ENCODE measurements at regions of chr14 and their contacts with region 1.

Region 1: GRCh38 chr14:37903343-37904191 is 304.1 kb upstream of the SSTR1 start:
- DNase-seq: peak; percentile 75
- ATAC-seq: peak; percentile 90
- H3K4me3 ChIP-seq: peak overlapping the region in 2 of 3 experiments; percentile 1 to 29; a peak in 2 of 6 replicates
- H3K27ac ChIP-seq: no peak overlapping the region
- H3K4me1 ChIP-seq: peaks cover 8% of the 10 kb centered on the region
- H3K27me3 ChIP-seq: no peaks in the 10 kb centered on the region
- CTCF ChIP-seq: peak; percentile 79
- EP300 ChIP-seq: no peak
- POLR2A ChIP-seq: no peak
- RAD21 ChIP-seq: peak; percentile 69

Region 2: GRCh38 chr14:38016497-38016896 is 112.9 kb after region 1 on chr14:
- CTCF ChIA-PET with region 1: interaction called, 6 read pairs
- POLR2A ChIA-PET with region 1: no interaction called
- in situ Hi-C with region 1: no loop called
- intact Hi-C with region 1: loop called (anchors 1 kb)
- DNase-seq: peak; percentile 41
- ATAC-seq: peak; percentile 95
- H3K4me3 ChIP-seq: no peak overlapping the region
- H3K27ac ChIP-seq: no peak overlapping the region
- H3K4me1 ChIP-seq: no peaks in the 10 kb centered on the region
- H3K27me3 ChIP-seq: no peaks in the 10 kb centered on the region
- CTCF ChIP-seq: peak; percentile 55
- EP300 ChIP-seq: no peak
- POLR2A ChIP-seq: no peak
- RAD21 ChIP-seq: no peak

Region 3: GRCh38 chr14:38197001-38197783 is 293.6 kb after region 1 on chr14:
- CTCF ChIA-PET with region 1: interaction called, 12 read pairs
- POLR2A ChIA-PET with region 1: no interaction called
- in situ Hi-C with region 1: no loop called
- intact Hi-C with region 1: loop called (anchors 1 kb)
- DNase-seq: no peak
- ATAC-seq: peak; percentile 57; the same call in 2 of the 3 replicates
- H3K4me3 ChIP-seq: no peak overlapping the region
- H3K27ac ChIP-seq: no peak overlapping the region
- H3K4me1 ChIP-seq: no peaks in the 10 kb centered on the region
- H3K27me3 ChIP-seq: no peaks in the 10 kb centered on the region; a peak in 1 of 5 replicates
- CTCF ChIP-seq: peak; percentile 29; the same call in 1 of the 2 replicates
- EP300 ChIP-seq: no peak
- POLR2A ChIP-seq: no peak
- RAD21 ChIP-seq: no peak

Region 4: DNA sequence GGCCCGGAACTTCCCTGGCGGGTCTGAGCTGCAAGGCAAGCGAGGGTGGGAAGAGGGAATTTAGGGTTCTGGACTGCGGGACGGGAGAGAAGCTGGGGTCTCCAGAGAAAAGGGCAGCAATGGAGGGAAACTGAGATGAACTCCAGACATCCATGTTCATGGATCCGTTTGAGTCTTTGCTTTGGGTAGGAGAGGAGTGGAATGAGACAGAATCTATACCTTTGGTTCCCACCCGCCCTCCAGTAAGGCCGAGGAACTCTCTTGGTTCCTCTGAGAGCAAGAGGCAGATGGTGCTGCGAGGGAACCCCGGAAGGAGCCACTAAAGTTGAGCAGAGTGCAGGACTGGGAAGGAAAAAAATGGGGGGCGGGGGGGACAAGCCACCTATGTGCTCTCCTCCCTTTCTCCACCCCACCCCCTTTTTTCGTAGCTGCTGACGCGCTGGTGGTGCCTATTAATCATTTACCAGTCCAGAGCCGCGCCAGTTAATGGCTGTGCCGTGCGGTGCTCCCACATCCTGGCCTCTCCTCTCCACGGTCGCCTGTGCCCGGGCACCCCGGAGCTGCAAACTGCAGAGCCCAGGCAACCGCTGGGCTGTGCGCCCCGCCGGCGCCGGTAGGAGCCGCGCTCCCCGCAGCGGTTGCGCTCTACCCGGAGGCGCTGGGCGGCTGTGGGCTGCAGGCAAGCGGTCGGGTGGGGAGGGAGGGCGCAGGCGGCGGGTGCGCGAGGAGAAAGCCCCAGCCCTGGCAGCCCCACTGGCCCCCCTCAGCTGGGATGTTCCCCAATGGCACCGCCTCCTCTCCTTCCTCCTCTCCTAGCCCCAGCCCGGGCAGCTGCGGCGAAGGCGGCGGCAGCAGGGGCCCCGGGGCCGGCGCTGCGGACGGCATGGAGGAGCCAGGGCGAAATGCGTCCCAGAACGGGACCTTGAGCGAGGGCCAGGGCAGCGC is 305.3 kb after region 1 on chr14:
- CTCF ChIA-PET with region 1: no interaction called
- POLR2A ChIA-PET with region 1: no interaction called
- in situ Hi-C with region 1: loop called (anchors 5 kb)
- intact Hi-C with region 1: no loop called
- DNase-seq: peak; percentile 33
- ATAC-seq: peak; percentile 89
- H3K4me3 ChIP-seq: peak overlapping the region; percentile 13 to 47 (median 25); a peak in 5 of 6 replicates
- H3K27ac ChIP-seq: no peak overlapping the region
- H3K4me1 ChIP-seq: peaks cover 15% of the 10 kb centered on the region
- H3K27me3 ChIP-seq: peaks cover 5 to 47% of the 10 kb centered on the region in 2 experiments
- CTCF ChIP-seq: peak; percentile 50
- EP300 ChIP-seq: no peak
- POLR2A ChIP-seq: no peak
- RAD21 ChIP-seq: no peak

Region 5: GRCh38 chr14:38357557-38357956 is 454.0 kb after region 1 on chr14:
- CTCF ChIA-PET with region 1: no interaction called
- POLR2A ChIA-PET with region 1: no interaction called
- in situ Hi-C with region 1: no loop called
- intact Hi-C with region 1: loop called (anchors 10 kb)
- DNase-seq: no peak
- ATAC-seq: no peak
- H3K4me3 ChIP-seq: no peak overlapping the region
- H3K27ac ChIP-seq: no peak overlapping the region
- H3K4me1 ChIP-seq: no peaks in the 10 kb centered on the region
- H3K27me3 ChIP-seq: no peaks in the 10 kb centered on the region
- CTCF ChIP-seq: no peak
- EP300 ChIP-seq: no peak
- POLR2A ChIP-seq: no peak
- RAD21 ChIP-seq: no peak

Region 6: GRCh38 chr14:38605193-38606114 is 701.9 kb after region 1 on chr14:
- CTCF ChIA-PET with region 1: no interaction called
- POLR2A ChIA-PET with region 1: no interaction called
- in situ Hi-C with region 1: no loop called
- intact Hi-C with region 1: loop called (anchors 5 kb)
- DNase-seq: peak; percentile 79
- ATAC-seq: peak; percentile 83
- H3K4me3 ChIP-seq: peak overlapping the region in 2 of 3 experiments; percentile 1 to 11; a peak in 2 of 6 replicates
- H3K27ac ChIP-seq: peak overlapping the region; percentile 14
- H3K4me1 ChIP-seq: peaks cover 24% of the 10 kb centered on the region
- H3K27me3 ChIP-seq: no peaks in the 10 kb centered on the region
- CTCF ChIP-seq: peak; percentile 56
- EP300 ChIP-seq: peak in 1 of 2 experiments; percentile 92; a peak in 2 of 4 replicates
- POLR2A ChIP-seq: no peak
- RAD21 ChIP-seq: peak; percentile 10; the same call in 1 of the 2 replicates

Measured in HepG2 (cell line).